Ovary (tissue), 10 donors: ENCODE measurements at regions of chr1 and their contacts with region 1.

Region 1: GRCh38 chr1:244864253-244865027 is at the start of gene HNRNPU:
- DNase-seq: peak; percentile 96 to 99 (median 97)
- H3K4me3 ChIP-seq: peak within 1 kb of the TSS; percentile 76
- H3K27ac ChIP-seq: peak within 1 kb of the TSS; percentile 98 to 99
- H3K4me1 ChIP-seq: peaks cover 9% of the 10 kb centered on the region
- H3K27me3 ChIP-seq: no peaks in the 10 kb centered on the region
- CTCF ChIP-seq: peak; percentile 46 to 71 (median 70)
- EP300 ChIP-seq: peak; percentile 78
- POLR2A ChIP-seq: peak; percentile 97
- total RNA-seq, gene HNRNPU: 269 to 408 (median 314) TPM

Region 2: DNA sequence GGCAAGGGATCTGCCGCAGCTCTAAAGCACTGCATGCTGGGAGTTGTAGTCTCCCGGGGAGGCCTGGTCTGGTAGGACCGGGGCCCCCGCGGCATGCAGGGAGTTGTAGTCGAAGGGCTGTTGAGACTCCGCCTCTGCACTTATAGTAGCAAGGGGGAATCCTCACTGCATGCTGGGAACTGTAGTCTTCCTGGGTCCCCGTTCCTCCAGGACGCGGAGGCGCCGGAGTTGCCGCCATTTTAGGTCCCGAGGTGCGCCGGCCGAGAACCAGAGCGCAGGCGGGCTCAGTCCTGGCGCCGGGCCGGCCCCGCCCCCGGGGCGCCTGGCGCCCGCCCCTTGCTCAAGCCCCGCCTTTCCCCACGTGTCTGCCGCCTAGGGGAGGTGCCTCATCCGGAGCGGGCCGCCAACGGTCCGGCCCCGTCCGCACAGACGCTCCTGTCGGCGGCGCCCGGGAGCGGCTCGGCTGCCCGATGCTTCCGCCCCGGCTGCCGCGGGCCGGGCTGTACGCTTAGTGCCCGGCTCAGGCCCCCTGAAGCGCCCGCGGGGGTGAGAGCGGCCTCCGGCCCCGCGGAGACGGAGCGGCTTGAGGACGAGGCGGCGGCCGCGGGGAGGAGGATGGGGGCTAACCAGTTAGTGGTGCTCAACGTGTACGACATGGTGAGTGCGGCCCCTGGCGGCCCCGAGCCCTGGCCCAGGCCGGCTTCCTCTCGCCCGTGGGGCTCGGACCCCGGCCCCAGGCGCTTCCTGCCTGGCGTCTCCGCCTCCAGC is 211.6 kb before region 1 on chr1 and contains the start of gene DESI2:
- intact Hi-C with region 1: loop called in 1 of 4 experiments (anchors 10 kb)
- DNase-seq: peak; percentile 98 to 99 (median 98)
- H3K4me3 ChIP-seq: peak within 1 kb of the TSS; percentile 82
- H3K27ac ChIP-seq: peak within 1 kb of the TSS; percentile 79 to 85
- H3K4me1 ChIP-seq: peaks cover 2% of the 10 kb centered on the region
- H3K27me3 ChIP-seq: no peaks in the 10 kb centered on the region
- CTCF ChIP-seq: peak in 2 of 3 donors; percentile 71 to 81
- EP300 ChIP-seq: no peak
- POLR2A ChIP-seq: peak; percentile 92
- total RNA-seq, gene DESI2: 20.4 to 33.4 (median 23.4) TPM

Region 3: DNA sequence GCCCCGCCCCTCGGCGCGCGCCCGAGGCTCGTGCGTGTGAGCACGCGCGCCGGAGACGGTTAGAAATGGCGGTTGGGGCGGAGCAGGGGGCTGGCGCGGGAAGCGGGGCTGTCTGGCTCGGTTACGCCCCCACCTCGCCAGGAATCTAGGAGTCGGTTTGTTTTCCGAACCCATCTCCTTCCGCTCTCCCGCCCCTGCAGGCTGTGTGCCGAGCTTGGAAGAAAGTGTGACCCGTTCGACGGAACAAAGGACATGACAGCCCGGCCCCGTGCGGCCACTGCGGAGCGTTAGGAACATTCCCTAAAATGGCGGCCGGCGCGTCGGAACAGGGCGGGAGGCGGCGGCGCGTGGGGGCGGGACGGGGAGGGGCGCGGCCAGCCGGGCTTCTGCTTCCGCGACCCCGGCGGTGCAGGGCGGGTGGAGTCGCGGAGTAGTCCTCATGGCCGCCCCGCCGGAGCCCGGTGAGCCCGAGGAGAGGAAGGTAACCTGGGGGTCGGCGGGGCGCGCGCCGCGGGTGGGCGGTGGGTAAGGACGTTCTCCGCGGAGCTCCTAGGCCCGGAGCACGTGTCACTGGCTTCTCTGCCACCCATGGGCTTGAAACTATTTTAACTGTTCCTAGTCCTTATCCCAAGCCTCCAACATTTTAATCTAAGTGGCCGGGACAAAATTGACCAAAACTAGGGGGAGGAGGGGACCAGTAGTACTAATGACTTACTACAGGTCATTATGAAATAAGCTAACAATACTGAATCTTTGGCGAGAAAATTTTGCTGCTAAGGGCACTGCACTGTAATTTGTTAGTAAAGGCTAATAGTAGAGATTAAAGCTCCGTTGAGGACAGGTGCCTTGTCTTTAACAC is 28.9 kb before region 1 on chr1 and contains the start of gene COX20:
- intact Hi-C with region 1: loop called in 2 of 4 experiments (anchors 1 kb)
- DNase-seq: peak; percentile 89 to 95 (median 93)
- H3K4me3 ChIP-seq: peak within 1 kb of the TSS; percentile 91
- H3K27ac ChIP-seq: peak within 1 kb of the TSS; percentile 97 to 98
- H3K4me1 ChIP-seq: peaks cover 4% of the 10 kb centered on the region
- H3K27me3 ChIP-seq: no peaks in the 10 kb centered on the region
- CTCF ChIP-seq: peak in 1 of 3 donors; percentile 6
- EP300 ChIP-seq: peak; percentile 39
- POLR2A ChIP-seq: peak; percentile 57
- total RNA-seq, gene COX20: 25.2 to 40.0 (median 35.8) TPM

Region 4: GRCh38 chr1:244970661-244971551 is 106.5 kb after region 1 on chr1:
- intact Hi-C with region 1: loop called in 3 of 4 experiments (anchors 1 to 2 kb)
- DNase-seq: peak; percentile 94 to 96 (median 95)
- H3K4me3 ChIP-seq: peak overlapping the region; percentile 86
- H3K27ac ChIP-seq: peak overlapping the region; percentile 97 to 98
- H3K4me1 ChIP-seq: peaks cover 4% of the 10 kb centered on the region
- H3K27me3 ChIP-seq: no peaks in the 10 kb centered on the region
- CTCF ChIP-seq: peak; percentile 29 to 84 (median 82)
- EP300 ChIP-seq: no peak
- POLR2A ChIP-seq: peak; percentile 30